Activated CD8-positive, alpha-beta T cell treated with anti-CD3 and anti-CD28 coated beads, Interleukin-2, amount 10 ng/mL, durations not matched to agents 7 days and 5 days (primary cell): ENCODE measurements at regions of chr11 and their contacts with region 1.

Region 1: GRCh38 chr11:72144807-72145560 is 9.5 kb downstream of the FOLR3 start:
- DNase-seq: no peak
- ATAC-seq: no peak
- H3K4me3 Mint-ChIP-seq: no peak overlapping the region
- H3K27ac Mint-ChIP-seq: no peak overlapping the region
- H3K4me1 Mint-ChIP-seq: peaks cover 24% of the 10 kb centered on the region
- H3K27me3 Mint-ChIP-seq: peaks cover 8% of the 10 kb centered on the region

Region 2: GRCh38 chr11:71977743-71978418 is 167.1 kb before region 1 on chr11:
- CTCF ChIA-PET with region 1: interaction called, 34 read pairs
- POLR2A ChIA-PET with region 1: no interaction called
- DNase-seq: peak; percentile 74
- ATAC-seq: peak; percentile 70
- H3K4me3 Mint-ChIP-seq: no peak overlapping the region
- H3K27ac Mint-ChIP-seq: no peak overlapping the region
- H3K4me1 Mint-ChIP-seq: no peaks in the 10 kb centered on the region
- H3K27me3 Mint-ChIP-seq: no peaks in the 10 kb centered on the region

Region 3: GRCh38 chr11:72091005-72091691 is 53.8 kb before region 1 on chr11:
- CTCF ChIA-PET with region 1: interaction called, 17 read pairs
- POLR2A ChIA-PET with region 1: no interaction called
- DNase-seq: peak; percentile 76
- ATAC-seq: peak; percentile 87
- H3K4me3 Mint-ChIP-seq: no peak overlapping the region
- H3K27ac Mint-ChIP-seq: peak overlapping the region; percentile 43
- H3K4me1 Mint-ChIP-seq: peaks cover 4% of the 10 kb centered on the region
- H3K27me3 Mint-ChIP-seq: no peaks in the 10 kb centered on the region

Region 4: GRCh38 chr11:72112321-72113219 is 32.4 kb before region 1 on chr11 and contains the start of gene ANAPC15:
- CTCF ChIA-PET with region 1: interaction called, 25 read pairs
- POLR2A ChIA-PET with region 1: interaction called, 10 read pairs
- DNase-seq: peak; percentile 100
- ATAC-seq: peak; percentile 93
- H3K4me3 Mint-ChIP-seq: peak within 1 kb of the TSS; percentile 95
- H3K27ac Mint-ChIP-seq: peak within 1 kb of the TSS; percentile 100
- H3K4me1 Mint-ChIP-seq: peaks cover 20% of the 10 kb centered on the region
- H3K27me3 Mint-ChIP-seq: no peaks in the 10 kb centered on the region
- total RNA-seq, gene ANAPC15: 62.9 to 69.5 TPM

Region 5: GRCh38 chr11:72160319-72160718 is 15.3 kb after region 1 on chr11:
- CTCF ChIA-PET with region 1: interaction called, 36 read pairs
- POLR2A ChIA-PET with region 1: interaction called, 3 read pairs
- DNase-seq: no peak
- ATAC-seq: no peak
- H3K4me3 Mint-ChIP-seq: no peak overlapping the region
- H3K27ac Mint-ChIP-seq: no peak overlapping the region
- H3K4me1 Mint-ChIP-seq: no peaks in the 10 kb centered on the region
- H3K27me3 Mint-ChIP-seq: peaks cover 18% of the 10 kb centered on the region